ENCODE measurements at regions of chr9 and their contacts with region 1.

Region 1: GRCh38 chr9:75482566-75482965 is 394.3 kb downstream of the OSTF1 start:
- DNase-seq: no peak
- H3K4me3 ChIP-seq: no peak overlapping the region
- H3K27ac ChIP-seq: no peak overlapping the region
- H3K4me1 ChIP-seq: no peaks in the 10 kb centered on the region
- H3K27me3 ChIP-seq: no peaks in the 10 kb centered on the region
- CTCF ChIP-seq: peak in 2 of 3 experiments; percentile 36 to 58; a peak in 3 of 4 replicates
- EP300 ChIP-seq: no peak
- POLR2A ChIP-seq: no peak
- RAD21 ChIP-seq: peak; percentile 77 to 82

Region 2: DNA sequence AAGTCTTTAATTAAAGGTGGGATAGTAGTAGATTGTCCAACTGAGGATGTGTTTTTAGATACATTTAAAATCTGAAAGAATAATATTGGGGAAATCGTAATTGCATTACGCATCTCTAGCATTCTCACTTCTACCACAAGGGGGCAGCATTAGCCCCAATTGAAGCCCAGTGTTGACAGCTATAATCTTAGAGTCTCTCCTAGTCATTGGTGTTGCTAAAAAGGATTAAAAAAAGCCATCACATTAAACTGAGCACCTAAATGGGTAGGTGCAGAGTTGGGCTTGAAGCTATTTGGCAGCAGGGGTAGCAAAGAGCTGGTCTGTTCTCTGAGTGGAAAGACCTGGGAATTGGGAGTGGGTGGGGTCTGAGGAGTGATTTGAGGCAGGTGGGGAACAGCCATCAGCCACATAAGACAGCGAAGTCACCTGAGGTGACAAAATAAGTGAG is 217.0 kb before region 1 on chr9:
- CTCF ChIA-PET with region 1: interaction called, 22 read pairs
- POLR2A ChIA-PET with region 1: no interaction called
- DNase-seq: peak; percentile 7 to 70
- H3K4me3 ChIP-seq: no peak overlapping the region
- H3K27ac ChIP-seq: no peak overlapping the region
- H3K4me1 ChIP-seq: no peaks in the 10 kb centered on the region
- H3K27me3 ChIP-seq: no peaks in the 10 kb centered on the region
- CTCF ChIP-seq: peak in 2 of 3 experiments; percentile 60 to 69; a peak in 3 of 4 replicates
- EP300 ChIP-seq: no peak
- POLR2A ChIP-seq: no peak
- RAD21 ChIP-seq: peak; percentile 85 to 87

Region 3: DNA sequence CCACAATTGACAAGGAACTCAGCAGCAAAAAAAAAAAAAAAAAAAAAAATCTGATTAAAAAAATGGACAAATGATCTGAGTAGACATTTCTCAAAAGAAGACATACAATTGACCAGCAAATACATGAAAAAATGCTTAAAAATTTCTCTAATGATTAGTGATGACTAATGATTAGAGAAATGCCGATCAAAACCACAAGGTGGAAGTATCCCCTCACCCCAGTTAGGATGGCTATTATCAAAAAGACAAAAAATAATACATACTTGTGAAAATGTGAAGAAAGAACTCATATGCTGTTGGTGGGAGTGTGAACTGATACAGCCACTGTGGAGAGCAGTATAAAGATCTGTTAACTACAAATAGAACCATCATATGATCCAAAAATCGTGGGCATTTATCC is 148.9 kb before region 1 on chr9:
- CTCF ChIA-PET with region 1: interaction called, 27 read pairs
- POLR2A ChIA-PET with region 1: interaction called, 3 read pairs
- DNase-seq: no peak
- H3K4me3 ChIP-seq: no peak overlapping the region
- H3K27ac ChIP-seq: no peak overlapping the region
- H3K4me1 ChIP-seq: no peaks in the 10 kb centered on the region
- H3K27me3 ChIP-seq: no peaks in the 10 kb centered on the region
- CTCF ChIP-seq: peak in 2 of 3 experiments; percentile 25 to 29; a peak in 2 of 4 replicates
- EP300 ChIP-seq: no peak
- POLR2A ChIP-seq: no peak
- RAD21 ChIP-seq: peak; percentile 61 to 80

Region 4: DNA sequence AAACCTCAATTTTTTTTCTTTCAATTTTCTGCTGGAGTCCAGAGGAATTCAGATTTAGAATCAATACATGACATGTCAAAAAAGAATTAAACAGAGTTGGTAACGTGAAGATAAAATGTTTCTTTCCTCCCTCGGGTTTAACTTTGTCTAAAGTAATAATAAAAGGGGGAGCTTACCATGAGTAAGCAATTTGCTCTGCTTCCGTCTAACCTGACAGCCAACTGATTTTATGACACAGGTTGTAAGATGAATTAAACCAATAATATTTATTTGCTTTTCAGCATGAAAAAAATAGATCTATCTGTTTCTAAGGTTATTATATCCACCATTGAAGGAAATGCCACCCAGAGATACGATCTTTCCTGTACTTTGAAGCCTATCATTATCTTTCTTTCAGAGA is 41.7 kb before region 1 on chr9:
- CTCF ChIA-PET with region 1: no interaction called
- POLR2A ChIA-PET with region 1: no interaction called
- DNase-seq: no peak
- H3K4me3 ChIP-seq: no peak overlapping the region
- H3K27ac ChIP-seq: no peak overlapping the region
- H3K4me1 ChIP-seq: no peaks in the 10 kb centered on the region
- H3K27me3 ChIP-seq: no peaks in the 10 kb centered on the region
- CTCF ChIP-seq: no peak
- EP300 ChIP-seq: no peak
- POLR2A ChIP-seq: no peak
- RAD21 ChIP-seq: no peak

Region 5: DNA sequence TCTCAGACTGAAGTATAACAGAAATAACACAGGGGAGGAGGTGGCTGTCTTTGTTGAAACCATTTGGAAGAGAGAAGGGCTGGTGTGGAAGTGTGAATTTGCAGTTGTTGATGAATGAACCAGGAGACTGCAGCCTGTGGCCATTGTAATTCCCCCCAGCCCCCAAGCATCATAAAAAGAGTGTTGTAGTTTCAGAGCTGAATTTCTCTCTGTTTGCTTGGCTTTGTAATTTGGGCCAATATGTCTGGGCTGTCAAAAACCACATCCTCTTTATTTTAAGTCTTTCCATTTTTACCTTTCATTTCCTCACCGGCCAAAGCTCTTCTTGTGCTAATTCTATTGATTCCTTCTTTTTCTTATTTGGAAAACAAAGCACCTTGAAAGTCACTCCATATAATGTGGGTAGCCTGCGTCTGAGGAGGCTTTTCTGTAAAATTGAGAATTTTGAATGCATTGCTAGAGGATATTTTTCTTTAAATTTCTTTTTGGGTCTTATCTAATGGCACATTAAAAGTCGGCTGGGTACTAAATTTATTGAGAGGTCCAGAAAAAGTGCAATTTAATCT is 10.9 kb before region 1 on chr9:
- CTCF ChIA-PET with region 1: interaction called, 10 read pairs
- POLR2A ChIA-PET with region 1: no interaction called
- DNase-seq: peak in 1 of 2 experiments; percentile 5
- H3K4me3 ChIP-seq: no peak overlapping the region; a peak in 1 of 8 replicates
- H3K27ac ChIP-seq: no peak overlapping the region
- H3K4me1 ChIP-seq: peaks cover 0 to 20% (median 6%) of the 10 kb centered on the region in 4 experiments; a peak in 5 of 7 replicates
- H3K27me3 ChIP-seq: no peaks in the 10 kb centered on the region
- CTCF ChIP-seq: no peak
- EP300 ChIP-seq: no peak
- POLR2A ChIP-seq: no peak
- RAD21 ChIP-seq: no peak

Region 6: GRCh38 chr9:75628952-75629351 is 146.4 kb after region 1 on chr9:
- CTCF ChIA-PET with region 1: no interaction called
- POLR2A ChIA-PET with region 1: no interaction called
- DNase-seq: no peak
- H3K4me3 ChIP-seq: no peak overlapping the region
- H3K27ac ChIP-seq: no peak overlapping the region
- H3K4me1 ChIP-seq: no peaks in the 10 kb centered on the region
- H3K27me3 ChIP-seq: no peaks in the 10 kb centered on the region
- CTCF ChIP-seq: no peak
- EP300 ChIP-seq: no peak
- POLR2A ChIP-seq: no peak
- RAD21 ChIP-seq: no peak